ENCODE measurements at regions of chr12 and their contacts with region 1.

Region 1: GRCh38 chr12:98319716-98320425 is 195.5 kb upstream of the TMPO start:
- DNase-seq: no peak
- ATAC-seq: no peak
- H3K4me3 ChIP-seq: no peak overlapping the region
- H3K27ac ChIP-seq: no peak overlapping the region
- H3K4me1 ChIP-seq: no peaks in the 10 kb centered on the region
- H3K27me3 ChIP-seq: no peaks in the 10 kb centered on the region
- CTCF ChIP-seq: no peak

Region 2: DNA sequence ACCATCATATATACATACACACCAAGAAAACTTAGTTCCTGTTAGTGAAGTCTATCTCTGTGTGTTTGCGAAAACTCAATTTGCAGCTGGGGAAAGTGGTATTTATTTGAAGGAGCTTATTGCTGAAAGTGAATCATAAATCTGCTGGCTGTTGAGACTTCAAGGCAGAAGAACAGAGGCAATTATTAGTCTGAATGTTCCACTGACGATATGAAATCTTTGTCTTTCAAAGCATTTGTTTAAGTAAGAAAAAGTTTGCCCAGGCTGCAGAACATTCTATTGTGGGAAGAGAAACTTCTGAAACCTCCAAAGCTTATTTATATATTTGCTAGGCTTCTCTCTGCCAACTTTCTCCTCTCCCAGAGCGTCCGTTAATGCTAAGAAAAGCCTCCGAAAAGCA is 60.2 kb before region 1 on chr12:
- intact Hi-C with region 1: loop called in 1 of 3 experiments (anchors 10 kb)
- DNase-seq: no peak
- ATAC-seq: no peak
- H3K4me3 ChIP-seq: no peak overlapping the region
- H3K27ac ChIP-seq: no peak overlapping the region
- H3K4me1 ChIP-seq: no peaks in the 10 kb centered on the region
- H3K27me3 ChIP-seq: no peaks in the 10 kb centered on the region
- CTCF ChIP-seq: no peak

Region 3: GRCh38 chr12:98470469-98471082 is 150.7 kb after region 1 on chr12:
- intact Hi-C with region 1: no loop called
- DNase-seq: no peak
- ATAC-seq: peak in 3 of 4 donors; percentile 32 to 59 (median 55)
- H3K4me3 ChIP-seq: no peak overlapping the region
- H3K27ac ChIP-seq: peak overlapping the region in 2 of 4 donors; percentile 23 to 44
- H3K4me1 ChIP-seq: peaks cover 0 to 9% (median 7%) of the 10 kb centered on the region in 3 donors
- H3K27me3 ChIP-seq: no peaks in the 10 kb centered on the region
- CTCF ChIP-seq: no peak